Mammary epithelial cell (primary cell): ENCODE measurements at regions of chr13 and their contacts with region 1.

Region 1: GRCh38 chr13:72489751-72490150 is 237.7 kb downstream of the MZT1 start:
- DNase-seq: no peak
- H3K4me3 ChIP-seq: no peak overlapping the region
- H3K27ac ChIP-seq: no peak overlapping the region
- H3K4me1 ChIP-seq: no peaks in the 10 kb centered on the region
- H3K27me3 ChIP-seq: peaks cover 5% of the 10 kb centered on the region
- CTCF ChIP-seq: no peak

Region 2: GRCh38 chr13:72284791-72285190 is 205.0 kb before region 1 on chr13:
- CTCF ChIA-PET with region 1: no interaction called
- dilution Hi-C with region 1: no loop called
- in situ Hi-C with region 1: no loop called
- intact Hi-C with region 1: loop called (anchors 10 kb)
- DNase-seq: no peak
- H3K4me3 ChIP-seq: no peak overlapping the region
- H3K27ac ChIP-seq: no peak overlapping the region
- H3K4me1 ChIP-seq: no peaks in the 10 kb centered on the region
- H3K27me3 ChIP-seq: no peaks in the 10 kb centered on the region
- CTCF ChIP-seq: no peak

Region 3: DNA sequence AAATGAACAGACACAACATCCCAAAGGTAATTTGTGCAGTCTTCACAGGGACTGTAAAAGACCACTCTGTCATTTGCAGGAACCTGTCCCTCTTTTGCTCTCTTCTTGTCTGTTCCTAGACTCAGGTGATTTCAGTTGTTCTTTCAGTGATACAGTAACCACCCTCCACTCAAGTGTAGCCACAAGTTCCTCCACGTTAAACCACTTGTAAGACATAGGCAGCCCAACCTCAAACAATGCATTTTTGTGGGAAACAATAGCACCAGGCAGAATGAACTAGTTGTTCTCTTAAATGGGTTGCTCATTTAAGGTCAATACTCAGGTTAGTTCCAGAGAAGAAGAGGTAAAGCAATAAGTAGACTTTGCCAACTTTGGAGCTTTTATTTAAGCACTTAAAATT is 121.7 kb before region 1 on chr13:
- CTCF ChIA-PET with region 1: no interaction called
- dilution Hi-C with region 1: no loop called
- in situ Hi-C with region 1: no loop called
- intact Hi-C with region 1: no loop called
- DNase-seq: peak; percentile 25
- H3K4me3 ChIP-seq: no peak overlapping the region
- H3K27ac ChIP-seq: no peak overlapping the region
- H3K4me1 ChIP-seq: no peaks in the 10 kb centered on the region
- H3K27me3 ChIP-seq: no peaks in the 10 kb centered on the region
- CTCF ChIP-seq: no peak

Region 4: DNA sequence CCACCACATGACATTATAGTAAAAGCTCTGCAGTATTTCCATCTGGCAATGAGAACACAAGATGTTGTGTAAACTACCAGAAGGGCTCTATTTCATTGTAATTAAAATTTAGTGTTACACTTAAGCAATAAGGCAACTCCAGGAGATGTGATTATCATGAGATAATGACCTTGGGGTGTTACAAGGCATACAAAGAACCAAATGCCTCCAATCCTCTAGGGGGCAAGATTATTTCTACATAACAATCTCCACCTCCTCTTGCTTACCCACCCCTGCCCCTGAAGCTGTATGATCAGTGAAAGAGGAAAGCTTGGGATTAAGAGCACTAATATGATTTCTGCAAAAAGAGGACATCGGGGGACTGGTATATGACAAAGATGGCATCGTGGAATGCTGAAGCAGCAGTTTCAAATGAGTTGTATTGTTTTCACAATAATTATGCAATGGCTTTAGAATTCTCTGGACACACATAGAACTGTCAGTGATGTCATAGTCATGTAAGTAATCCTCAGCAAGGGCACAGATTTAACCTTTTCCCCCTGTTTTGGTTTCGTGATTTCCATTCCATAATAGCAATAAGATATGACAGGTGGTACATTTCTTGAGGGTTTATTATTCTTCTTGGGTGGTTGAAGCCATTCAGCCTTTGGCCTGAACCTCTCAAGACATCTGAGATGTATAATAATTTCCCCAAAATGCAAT is 57.6 kb before region 1 on chr13:
- CTCF ChIA-PET with region 1: no interaction called
- dilution Hi-C with region 1: no loop called
- in situ Hi-C with region 1: no loop called
- intact Hi-C with region 1: no loop called
- DNase-seq: no peak
- H3K4me3 ChIP-seq: no peak overlapping the region
- H3K27ac ChIP-seq: no peak overlapping the region
- H3K4me1 ChIP-seq: peaks cover 3% of the 10 kb centered on the region
- H3K27me3 ChIP-seq: no peaks in the 10 kb centered on the region
- CTCF ChIP-seq: no peak

Region 5: GRCh38 chr13:72469906-72470305 is 19.8 kb before region 1 on chr13:
- CTCF ChIA-PET with region 1: no interaction called
- dilution Hi-C with region 1: no loop called
- in situ Hi-C with region 1: no loop called
- intact Hi-C with region 1: no loop called
- DNase-seq: no peak
- H3K4me3 ChIP-seq: no peak overlapping the region
- H3K27ac ChIP-seq: no peak overlapping the region
- H3K4me1 ChIP-seq: no peaks in the 10 kb centered on the region
- H3K27me3 ChIP-seq: no peaks in the 10 kb centered on the region
- CTCF ChIP-seq: no peak